ENCODE measurements at regions of chr4 and their contacts with region 1.

Region 1: DNA sequence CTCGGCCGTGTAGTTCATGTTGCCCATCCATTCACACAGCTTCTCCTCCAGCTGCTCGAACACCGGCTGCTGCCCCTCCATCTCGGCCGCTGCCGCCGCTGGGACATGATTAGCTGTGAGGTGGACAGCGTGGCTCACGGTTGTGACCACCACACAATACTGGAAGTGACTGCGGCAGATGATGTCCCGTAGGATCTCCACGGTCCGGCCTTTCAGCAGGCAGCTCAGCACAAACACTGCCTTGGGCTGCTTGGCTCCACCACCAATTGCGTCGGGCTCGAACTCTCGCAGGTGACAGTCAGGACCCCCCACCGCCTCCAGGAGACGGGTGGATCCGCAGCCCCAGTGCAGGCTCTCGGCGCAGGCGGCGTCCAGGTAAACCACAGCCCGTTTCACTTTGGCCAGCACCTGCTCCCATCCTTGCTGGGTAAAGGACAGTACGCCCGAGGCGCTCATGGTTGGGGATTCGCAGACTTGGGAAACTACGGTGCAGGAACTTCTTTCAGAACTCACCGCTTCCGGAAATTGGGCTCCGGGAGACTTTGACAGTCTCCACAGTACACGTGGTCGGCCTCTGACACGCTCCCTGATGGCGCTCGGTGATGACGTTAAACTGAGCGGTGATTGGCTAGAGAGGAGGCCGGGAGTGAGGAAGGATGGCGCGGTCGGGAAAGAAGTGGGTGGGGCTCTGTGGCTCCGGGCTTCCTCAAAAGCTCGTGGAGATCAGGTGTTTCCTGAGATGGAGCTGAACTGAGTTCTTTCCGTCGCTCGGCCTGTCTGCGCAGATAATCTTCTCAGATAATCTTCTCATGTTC is at the start of gene SCFD2:
- DNase-seq: peak; percentile 96
- H3K4me3 ChIP-seq: peak within 1 kb of the TSS; percentile 49 to 97 (median 74)
- H3K27ac ChIP-seq: peak within 1 kb of the TSS; percentile 7
- H3K4me1 ChIP-seq: peaks cover 17% of the 10 kb centered on the region
- H3K27me3 ChIP-seq: peaks cover 14 to 19% of the 10 kb centered on the region in 2 experiments
- CTCF ChIP-seq: no peak
- POLR2A ChIP-seq: peak; percentile 67
- total RNA-seq, gene SCFD2: 17.6 and 22.8 TPM in 2 replicates

Region 2: DNA sequence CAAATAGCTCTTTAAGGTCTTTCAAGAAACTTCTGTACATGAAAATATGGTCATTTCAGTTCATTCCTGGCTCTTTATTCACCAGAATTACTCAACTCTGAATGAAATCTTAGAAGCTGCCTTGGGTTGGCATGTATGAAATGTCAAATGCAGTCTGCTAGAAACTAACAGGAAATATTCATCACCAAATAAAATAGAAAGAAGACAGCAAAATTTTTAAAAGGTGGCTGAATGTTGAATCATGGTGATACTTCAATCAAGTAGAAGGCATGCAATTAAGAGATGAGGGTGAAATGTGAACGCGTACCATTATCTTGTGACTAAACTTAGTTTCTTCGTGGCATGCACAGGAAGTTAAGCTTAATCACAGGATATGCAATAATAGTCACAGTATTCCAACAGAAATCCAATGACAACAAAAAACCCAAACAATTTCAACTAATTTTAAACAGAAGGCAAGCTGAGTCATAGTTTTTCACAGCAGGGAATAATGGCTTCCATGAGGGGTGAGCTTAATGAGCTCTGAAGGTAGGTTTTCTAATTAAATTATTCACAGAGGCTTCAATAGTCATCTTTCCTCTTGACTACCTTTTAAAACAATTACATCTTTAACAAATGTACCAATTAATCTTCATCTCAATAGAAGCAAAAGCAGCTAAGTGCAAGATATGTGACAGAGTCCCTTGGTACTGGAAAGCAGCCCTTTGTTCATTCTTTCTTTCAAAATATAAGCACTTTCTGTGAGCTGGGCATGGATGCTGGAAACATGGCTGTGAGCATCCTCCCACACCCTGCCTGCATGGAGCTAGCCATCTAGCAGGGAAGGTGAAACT is 44.3 kb before region 1 on chr4:
- CTCF ChIA-PET with region 1: no interaction called
- POLR2A ChIA-PET with region 1: interaction called, 5 read pairs
- dilution Hi-C with region 1: no loop called
- intact Hi-C with region 1: loop called (anchors 1 kb)
- DNase-seq: peak; percentile 94
- H3K4me3 ChIP-seq: peak overlapping the region in 1 of 3 experiments; percentile 32
- H3K27ac ChIP-seq: peak overlapping the region; percentile 98
- H3K4me1 ChIP-seq: peaks cover 29% of the 10 kb centered on the region
- H3K27me3 ChIP-seq: no peaks in the 10 kb centered on the region
- CTCF ChIP-seq: no peak
- POLR2A ChIP-seq: peak; percentile 56

Measured in endothelial cell of umbilical vein (primary cell).